Natural killer cell (primary cell): ENCODE measurements at regions of chr3 and their contacts with region 1.

Region 1: DNA sequence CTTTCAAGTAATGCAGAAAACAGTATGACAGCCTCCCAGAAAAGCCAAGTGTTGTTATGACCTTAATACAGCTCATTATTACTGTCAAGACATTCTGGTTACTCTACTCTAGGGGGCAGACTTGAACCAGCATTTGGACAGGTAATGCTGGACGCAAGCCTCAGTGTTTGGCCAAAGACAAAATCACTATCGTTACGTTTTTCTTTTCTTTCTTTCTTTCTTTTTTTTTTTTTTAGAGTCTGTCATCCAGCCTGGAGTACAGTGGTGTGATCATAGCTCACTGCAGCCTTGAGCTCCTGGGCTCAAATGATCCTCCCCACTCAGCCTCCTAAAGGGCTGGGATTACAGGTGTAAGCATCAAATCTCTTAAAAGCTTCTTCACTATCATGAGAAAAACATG is 29.4 kb upstream of the TMEM45A start:
- DNase-seq: peak in 1 of 2 donors; percentile 20
- ATAC-seq: peak in 2 of 3 donors; percentile 46 to 52
- H3K4me3 ChIP-seq: no peak overlapping the region
- H3K4me3 Mint-ChIP-seq: no peak overlapping the region
- H3K27ac ChIP-seq: no peak overlapping the region
- H3K27ac Mint-ChIP-seq: no peak overlapping the region
- H3K4me1 ChIP-seq: no peaks in the 10 kb centered on the region
- H3K4me1 Mint-ChIP-seq: peaks cover 0 to 7% of the 10 kb centered on the region in 2 donors
- H3K27me3 ChIP-seq: no peaks in the 10 kb centered on the region
- H3K27me3 Mint-ChIP-seq: peaks cover 4 to 7% of the 10 kb centered on the region in 2 donors
- CTCF ChIP-seq: peak; percentile 38

Region 2: GRCh38 chr3:100581650-100582049 is 118.6 kb after region 1 on chr3:
- intact Hi-C with region 1: loop called (anchors 10 kb)
- DNase-seq: no peak
- ATAC-seq: no peak
- H3K4me3 ChIP-seq: no peak overlapping the region
- H3K4me3 Mint-ChIP-seq: no peak overlapping the region
- H3K27ac ChIP-seq: no peak overlapping the region
- H3K27ac Mint-ChIP-seq: no peak overlapping the region
- H3K4me1 ChIP-seq: no peaks in the 10 kb centered on the region
- H3K4me1 Mint-ChIP-seq: no peaks in the 10 kb centered on the region
- H3K27me3 ChIP-seq: no peaks in the 10 kb centered on the region
- H3K27me3 Mint-ChIP-seq: peaks cover 3 to 26% of the 10 kb centered on the region in 2 donors
- CTCF ChIP-seq: no peak